ENCODE measurements at regions of chr5 and their contacts with region 1.

Region 1: DNA sequence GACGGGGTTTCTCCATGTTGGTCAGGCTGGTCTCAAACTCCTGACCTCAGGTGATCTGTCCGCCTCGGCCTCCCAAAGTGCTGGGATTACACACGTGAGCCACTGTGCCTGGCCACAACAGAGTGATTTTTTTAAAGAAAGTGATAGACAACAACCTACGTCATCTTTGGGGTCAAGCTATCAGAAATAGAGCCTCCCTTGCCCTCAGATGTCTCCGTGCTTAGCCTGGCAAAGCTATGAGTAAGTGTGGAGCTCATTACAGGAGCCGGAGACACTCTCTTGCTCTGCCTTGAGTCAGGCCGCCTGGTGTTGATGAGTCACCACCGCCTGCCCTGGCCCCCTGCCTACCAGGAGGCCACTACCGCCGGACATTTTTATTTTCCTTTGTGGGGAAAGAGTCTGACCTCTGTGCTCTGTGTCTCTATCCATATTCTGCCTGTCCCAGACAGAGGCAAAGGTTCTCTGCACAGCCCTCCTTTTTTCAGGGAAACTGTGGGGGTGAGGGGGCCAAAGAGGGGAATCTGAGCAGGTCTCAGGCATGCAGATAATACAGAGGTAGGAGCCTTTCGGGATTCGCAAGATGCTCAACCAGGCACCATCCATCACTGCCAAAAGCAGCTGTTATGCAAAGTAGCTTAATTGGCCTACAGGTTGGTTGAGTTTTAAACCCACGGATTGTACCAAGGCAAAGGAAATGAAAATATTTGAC is 123.7 kb upstream of the CPEB4 start:
- DNase-seq: peak; percentile 99
- H3K4me3 Mint-ChIP-seq: peak overlapping the region; percentile 22
- H3K27ac Mint-ChIP-seq: peak overlapping the region; percentile 77
- H3K4me1 Mint-ChIP-seq: peaks cover 40% of the 10 kb centered on the region
- H3K27me3 Mint-ChIP-seq: no peaks in the 10 kb centered on the region
- CTCF ChIP-seq: no peak

Region 2: DNA sequence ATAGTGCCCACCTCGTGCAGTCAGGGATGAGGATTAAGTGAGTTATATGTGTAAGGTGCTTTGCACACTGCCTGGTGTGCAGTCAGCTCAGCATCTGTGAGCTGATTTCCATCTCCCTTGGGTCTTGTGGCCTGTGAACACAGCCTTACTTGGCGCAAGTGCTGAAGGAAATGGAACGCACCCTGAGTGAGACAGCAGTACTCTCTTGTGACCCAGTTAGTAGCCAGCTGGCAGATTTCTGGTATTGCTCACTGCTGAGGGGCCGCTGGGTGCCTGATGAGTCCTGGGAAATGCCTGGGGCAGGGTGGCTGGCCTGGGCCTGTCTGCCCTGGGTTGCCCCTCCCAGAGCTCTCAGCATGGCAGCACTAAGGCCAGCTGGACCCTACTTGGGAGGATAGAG is 57.1 kb before region 1 on chr5:
- CTCF ChIA-PET with region 1: interaction called, 6 read pairs
- POLR2A ChIA-PET with region 1: interaction called, 26 read pairs
- intact Hi-C with region 1: loop called (anchors 2 kb)
- DNase-seq: peak; percentile 91
- H3K4me3 Mint-ChIP-seq: no peak overlapping the region
- H3K27ac Mint-ChIP-seq: peak overlapping the region; percentile 24
- H3K4me1 Mint-ChIP-seq: peaks cover 20% of the 10 kb centered on the region
- H3K27me3 Mint-ChIP-seq: no peaks in the 10 kb centered on the region
- CTCF ChIP-seq: no peak

Region 3: DNA sequence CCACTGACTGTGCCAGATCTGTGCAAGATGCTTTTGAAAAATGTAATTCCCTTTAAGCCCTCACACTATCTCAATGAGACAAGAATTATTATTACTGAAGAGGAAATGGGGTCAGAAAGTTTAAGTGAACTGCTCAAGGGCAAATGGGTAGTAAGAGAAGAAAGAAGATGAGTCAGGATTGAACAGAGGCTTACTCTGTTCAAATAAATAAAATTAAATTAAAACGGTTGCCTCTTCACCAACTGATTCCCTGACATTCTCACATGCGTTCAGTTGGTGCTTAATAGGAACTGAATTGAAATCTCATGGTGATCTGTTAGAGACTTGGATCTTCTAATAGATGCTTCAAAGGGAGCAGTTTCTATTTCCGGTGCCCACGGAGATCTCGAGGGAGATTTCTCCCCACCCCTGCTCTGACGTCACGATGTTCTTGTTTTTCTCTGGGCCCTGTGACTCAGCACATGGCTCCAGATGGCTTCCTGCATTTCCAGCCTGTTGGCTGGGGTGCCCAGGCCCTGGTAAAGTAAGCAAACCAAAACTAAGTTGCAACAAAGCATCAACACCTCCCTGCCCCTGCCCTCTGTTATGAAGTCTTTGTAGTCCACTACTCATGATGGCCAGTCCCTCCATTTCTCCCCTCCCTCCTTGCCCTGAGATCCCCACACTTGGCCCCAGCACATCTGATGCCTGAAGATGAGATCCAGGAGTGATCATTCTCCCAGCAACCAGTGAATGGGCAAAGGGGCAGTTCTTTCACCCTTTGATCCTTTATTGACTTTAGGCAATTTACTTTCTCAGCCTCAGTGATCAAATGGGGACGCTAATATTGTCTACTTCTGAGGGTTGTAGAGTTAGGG is 17.6 kb after region 1 on chr5:
- CTCF ChIA-PET with region 1: interaction called, 16 read pairs
- POLR2A ChIA-PET with region 1: interaction called, 112 read pairs
- intact Hi-C with region 1: loop called (anchors 2 kb)
- DNase-seq: peak; percentile 96
- H3K4me3 Mint-ChIP-seq: peak overlapping the region; percentile 39
- H3K27ac Mint-ChIP-seq: peak overlapping the region; percentile 99
- H3K4me1 Mint-ChIP-seq: peaks cover 43% of the 10 kb centered on the region
- H3K27me3 Mint-ChIP-seq: no peaks in the 10 kb centered on the region
- CTCF ChIP-seq: no peak

Region 4: GRCh38 chr5:173795601-173796300 is 31.3 kb after region 1 on chr5:
- CTCF ChIA-PET with region 1: no interaction called
- POLR2A ChIA-PET with region 1: interaction called, 112 read pairs
- intact Hi-C with region 1: no loop called
- DNase-seq: no peak
- H3K4me3 Mint-ChIP-seq: no peak overlapping the region
- H3K27ac Mint-ChIP-seq: peak overlapping the region; percentile 78
- H3K4me1 Mint-ChIP-seq: peaks cover 73% of the 10 kb centered on the region
- H3K27me3 Mint-ChIP-seq: no peaks in the 10 kb centered on the region
- CTCF ChIP-seq: no peak

Region 5: DNA sequence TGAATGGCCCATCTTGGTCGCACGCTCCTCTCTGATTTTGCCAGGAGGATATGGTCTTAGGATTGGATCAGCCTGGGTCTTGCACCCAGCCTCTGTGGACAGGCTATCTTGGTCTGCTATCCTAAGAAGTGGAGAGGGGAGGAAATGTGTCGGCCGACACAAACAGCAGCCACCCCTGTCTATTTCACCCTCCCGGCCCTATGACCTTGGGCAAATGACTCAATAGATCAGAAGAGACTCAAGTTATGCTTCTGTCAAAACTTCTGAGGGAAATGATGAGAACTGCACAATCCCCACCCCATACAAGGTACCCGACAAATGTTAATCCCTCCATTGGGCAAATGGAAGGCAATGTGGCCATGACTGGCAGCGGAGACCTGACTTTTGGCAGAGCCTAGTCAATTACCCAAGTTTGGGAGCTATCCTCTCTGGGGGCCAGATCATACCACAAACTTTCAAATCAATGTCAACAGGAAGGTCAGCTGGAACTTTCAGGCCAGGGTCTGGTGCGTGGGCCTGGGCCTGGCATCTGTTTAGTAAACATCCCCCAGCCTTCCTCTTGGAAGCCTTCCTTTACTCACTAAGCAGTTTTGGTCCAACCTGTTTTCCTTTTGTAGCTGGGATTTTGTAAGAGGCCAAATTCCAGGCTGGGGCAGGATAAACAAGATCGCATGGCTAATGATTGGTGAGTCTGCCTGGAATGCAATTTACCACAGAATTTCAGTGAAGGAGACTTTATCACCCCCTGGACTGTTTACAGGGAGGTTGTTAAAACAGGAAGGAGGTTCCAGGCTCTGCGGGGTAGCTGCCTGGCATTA is 59.4 kb after region 1 on chr5:
- CTCF ChIA-PET with region 1: no interaction called
- POLR2A ChIA-PET with region 1: interaction called, 14 read pairs
- intact Hi-C with region 1: no loop called
- DNase-seq: peak; percentile 94
- H3K4me3 Mint-ChIP-seq: no peak overlapping the region
- H3K27ac Mint-ChIP-seq: peak overlapping the region; percentile 83
- H3K4me1 Mint-ChIP-seq: peaks cover 34% of the 10 kb centered on the region
- H3K27me3 Mint-ChIP-seq: no peaks in the 10 kb centered on the region
- CTCF ChIP-seq: no peak

Region 6: DNA sequence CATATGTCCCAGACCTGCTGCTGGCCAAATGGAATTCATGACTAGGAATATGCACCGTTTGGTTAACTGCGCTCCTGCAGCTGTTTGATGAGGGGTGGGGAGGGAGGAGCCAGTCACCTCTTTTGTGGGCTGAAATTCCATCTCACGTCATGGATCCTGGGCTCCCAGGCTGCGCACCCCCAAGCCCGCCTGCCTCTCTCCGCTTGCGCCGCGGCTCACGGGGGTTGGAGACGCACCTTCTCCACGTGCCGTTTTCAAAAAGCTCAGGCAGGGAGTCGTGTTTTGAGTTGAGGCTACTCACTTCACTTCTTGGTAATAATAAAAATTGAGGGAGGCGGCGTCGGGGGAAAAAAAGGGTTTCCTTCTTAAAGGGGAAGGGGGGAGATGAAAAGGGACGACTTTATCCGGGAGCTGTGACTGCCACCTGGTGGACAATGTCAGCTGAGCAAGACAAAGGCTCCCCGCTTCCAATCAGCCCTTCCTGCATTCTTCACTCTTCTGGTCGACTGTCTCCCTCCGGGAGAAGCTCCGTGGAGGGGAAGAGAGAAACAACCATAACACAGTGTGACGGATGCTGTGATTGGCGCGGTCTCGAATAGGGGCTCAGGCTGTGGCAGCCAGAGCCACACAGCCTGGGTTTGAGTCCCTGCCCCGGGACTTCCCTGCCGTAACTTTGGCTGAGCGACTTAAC is 208.6 kb after region 1 on chr5:
- CTCF ChIA-PET with region 1: interaction called, 4 read pairs
- POLR2A ChIA-PET with region 1: interaction called, 5 read pairs
- intact Hi-C with region 1: loop called (anchors 2 kb)
- DNase-seq: peak; percentile 87
- H3K4me3 Mint-ChIP-seq: peak overlapping the region; percentile 59
- H3K27ac Mint-ChIP-seq: peak overlapping the region; percentile 57
- H3K4me1 Mint-ChIP-seq: peaks cover 23% of the 10 kb centered on the region
- H3K27me3 Mint-ChIP-seq: peaks cover 20% of the 10 kb centered on the region
- CTCF ChIP-seq: peak; percentile 95

Region 7: GRCh38 chr5:174134574-174134973 is 370.1 kb after region 1 on chr5:
- CTCF ChIA-PET with region 1: no interaction called
- POLR2A ChIA-PET with region 1: no interaction called
- intact Hi-C with region 1: no loop called
- DNase-seq: no peak
- H3K4me3 Mint-ChIP-seq: no peak overlapping the region
- H3K27ac Mint-ChIP-seq: no peak overlapping the region
- H3K4me1 Mint-ChIP-seq: no peaks in the 10 kb centered on the region
- H3K27me3 Mint-ChIP-seq: no peaks in the 10 kb centered on the region
- CTCF ChIP-seq: no peak

Region 8: DNA sequence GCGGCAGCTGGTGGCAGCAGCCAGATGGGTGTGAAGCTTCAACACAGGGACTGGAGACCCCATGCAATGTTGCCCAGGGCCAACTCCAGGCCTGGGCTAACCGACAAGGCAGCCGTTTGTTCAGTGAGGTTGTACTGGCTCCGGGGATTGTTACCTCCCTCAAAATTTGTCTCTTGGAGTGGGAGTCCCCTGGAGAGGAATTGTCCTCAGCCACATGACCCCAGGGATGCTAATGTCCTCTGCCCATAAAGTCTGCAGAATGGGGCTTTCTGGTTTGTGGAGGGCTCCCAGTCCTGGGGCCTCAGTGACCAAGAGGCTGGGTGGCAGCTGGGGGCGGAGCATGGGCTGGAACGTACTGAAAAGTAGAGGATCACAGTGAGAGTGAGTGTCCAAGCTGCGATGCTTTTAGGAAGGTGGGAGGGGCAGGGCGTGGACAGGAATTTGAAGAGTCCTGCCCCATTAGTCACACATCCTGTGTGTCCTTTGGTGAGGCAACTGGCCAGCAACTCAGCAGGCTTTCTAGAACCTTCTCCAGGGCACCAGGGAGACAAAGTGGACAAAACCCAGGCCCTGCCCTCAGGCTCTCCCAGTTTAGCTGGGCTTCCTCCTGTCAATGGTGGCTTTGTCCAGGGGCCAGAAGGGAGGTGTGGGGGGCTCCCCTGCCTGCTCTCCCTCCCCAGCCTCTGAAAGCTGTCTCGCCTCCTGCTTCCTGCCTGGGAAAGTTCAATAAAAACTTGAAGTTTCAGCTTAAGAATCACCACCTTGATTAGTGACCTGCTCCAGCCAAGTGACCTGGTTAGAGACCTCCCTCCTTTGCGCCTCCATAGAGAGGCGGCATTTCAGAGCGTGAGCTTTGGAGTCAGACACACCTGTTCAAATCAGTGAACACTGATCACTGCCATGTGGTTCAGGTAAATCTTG is 395.1 kb after region 1 on chr5:
- CTCF ChIA-PET with region 1: no interaction called
- POLR2A ChIA-PET with region 1: no interaction called
- intact Hi-C with region 1: no loop called
- DNase-seq: peak; percentile 96
- H3K4me3 Mint-ChIP-seq: no peak overlapping the region
- H3K27ac Mint-ChIP-seq: peak overlapping the region; percentile 84
- H3K4me1 Mint-ChIP-seq: peaks cover 32% of the 10 kb centered on the region
- H3K27me3 Mint-ChIP-seq: no peaks in the 10 kb centered on the region
- CTCF ChIP-seq: no peak